Activated CD8-positive, alpha-beta T cell treated with anti-CD3 and anti-CD28 coated beads for 36 hours (primary cell): ENCODE measurements at regions of chr17 and their contacts with region 1.

Region 1: GRCh38 chr17:5031365-5032082 is 3.7 kb downstream of the SLC52A1 start:
- DNase-seq: peak; percentile 93
- ATAC-seq: peak; percentile 86
- H3K4me3 Mint-ChIP-seq: peak overlapping the region; percentile 66
- H3K27ac Mint-ChIP-seq: peak overlapping the region; percentile 83
- H3K4me1 Mint-ChIP-seq: peaks cover 16% of the 10 kb centered on the region
- H3K27me3 Mint-ChIP-seq: no peaks in the 10 kb centered on the region
- CTCF ChIP-seq: peak; percentile 83

Region 2: DNA sequence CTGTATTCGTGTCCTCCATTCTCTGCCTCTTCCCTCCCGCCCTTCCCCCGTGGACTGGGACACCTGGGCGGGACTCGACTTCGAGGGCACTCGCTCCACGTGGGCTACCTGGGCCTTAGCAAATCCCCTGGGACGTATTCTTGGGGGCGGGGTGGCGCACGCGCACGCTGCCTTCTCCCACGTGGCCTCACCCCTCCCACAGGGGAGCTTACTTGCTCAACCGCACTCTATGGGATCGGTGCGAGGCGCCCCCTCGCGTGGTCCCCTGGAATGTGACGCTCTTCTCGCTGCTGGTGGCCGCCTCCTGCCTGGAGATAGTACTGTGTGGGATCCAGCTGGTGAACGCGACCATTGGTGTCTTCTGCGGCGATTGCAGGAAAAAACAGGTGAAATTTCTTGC is 248.9 kb before region 1 on chr17:
- CTCF ChIA-PET with region 1: no interaction called
- POLR2A ChIA-PET with region 1: no interaction called
- intact Hi-C with region 1: no loop called
- DNase-seq: peak; percentile 31
- ATAC-seq: peak; percentile 28
- H3K4me3 Mint-ChIP-seq: no peak overlapping the region
- H3K27ac Mint-ChIP-seq: no peak overlapping the region
- H3K4me1 Mint-ChIP-seq: peaks cover 15% of the 10 kb centered on the region
- H3K27me3 Mint-ChIP-seq: peaks cover 46% of the 10 kb centered on the region
- CTCF ChIP-seq: no peak

Region 3: DNA sequence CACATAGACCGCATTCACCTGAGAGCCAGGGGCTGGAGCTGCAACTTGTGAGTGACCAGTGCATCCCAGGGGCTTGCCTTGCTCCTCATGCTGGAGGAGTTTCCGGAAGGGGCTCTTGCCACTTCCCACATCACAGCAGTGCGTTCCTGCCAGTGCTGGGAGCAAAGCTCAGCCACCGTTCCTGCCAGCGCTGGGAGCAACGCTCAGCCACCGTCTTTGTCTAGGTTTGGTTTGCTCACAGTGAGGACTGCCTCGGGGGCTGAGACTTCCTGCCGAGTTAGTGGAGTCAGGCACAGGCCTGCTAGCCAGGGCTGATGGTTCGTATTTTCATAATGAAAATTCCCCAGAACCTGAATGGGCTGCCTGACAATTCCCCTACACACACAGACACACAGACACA is 123.2 kb before region 1 on chr17:
- CTCF ChIA-PET with region 1: interaction called, 12 read pairs
- POLR2A ChIA-PET with region 1: no interaction called
- intact Hi-C with region 1: no loop called
- DNase-seq: peak; percentile 31
- ATAC-seq: peak; percentile 11
- H3K4me3 Mint-ChIP-seq: no peak overlapping the region
- H3K27ac Mint-ChIP-seq: no peak overlapping the region
- H3K4me1 Mint-ChIP-seq: peaks cover 12% of the 10 kb centered on the region
- H3K27me3 Mint-ChIP-seq: no peaks in the 10 kb centered on the region
- CTCF ChIP-seq: no peak

Region 4: GRCh38 chr17:4953461-4953961 is 78.0 kb before region 1 on chr17:
- CTCF ChIA-PET with region 1: no interaction called
- POLR2A ChIA-PET with region 1: no interaction called
- intact Hi-C with region 1: no loop called
- DNase-seq: no peak
- ATAC-seq: no peak
- H3K4me3 Mint-ChIP-seq: no peak overlapping the region
- H3K27ac Mint-ChIP-seq: no peak overlapping the region
- H3K4me1 Mint-ChIP-seq: peaks cover 18% of the 10 kb centered on the region
- H3K27me3 Mint-ChIP-seq: no peaks in the 10 kb centered on the region
- CTCF ChIP-seq: no peak

Region 5: GRCh38 chr17:5019475-5019956 is 12.0 kb before region 1 on chr17:
- CTCF ChIA-PET with region 1: interaction called, 11 read pairs
- POLR2A ChIA-PET with region 1: interaction called, 3 read pairs
- intact Hi-C with region 1: no loop called
- DNase-seq: peak; percentile 73
- ATAC-seq: peak; percentile 98
- H3K4me3 Mint-ChIP-seq: no peak overlapping the region
- H3K27ac Mint-ChIP-seq: peak overlapping the region; percentile 44
- H3K4me1 Mint-ChIP-seq: peaks cover 15% of the 10 kb centered on the region
- H3K27me3 Mint-ChIP-seq: no peaks in the 10 kb centered on the region
- CTCF ChIP-seq: peak; percentile 45

Region 6: GRCh38 chr17:5049314-5049895 is 17.9 kb after region 1 on chr17:
- CTCF ChIA-PET with region 1: interaction called, 16 read pairs
- POLR2A ChIA-PET with region 1: interaction called, 5 read pairs
- intact Hi-C with region 1: no loop called
- DNase-seq: peak; percentile 69
- ATAC-seq: peak; percentile 84
- H3K4me3 Mint-ChIP-seq: no peak overlapping the region
- H3K27ac Mint-ChIP-seq: peak overlapping the region; percentile 79
- H3K4me1 Mint-ChIP-seq: peaks cover 32% of the 10 kb centered on the region
- H3K27me3 Mint-ChIP-seq: no peaks in the 10 kb centered on the region
- CTCF ChIP-seq: no peak

Region 7: GRCh38 chr17:5055543-5055942 is 24.0 kb after region 1 on chr17:
- CTCF ChIA-PET with region 1: interaction called, 75 read pairs
- POLR2A ChIA-PET with region 1: no interaction called
- intact Hi-C with region 1: no loop called
- DNase-seq: no peak
- ATAC-seq: no peak
- H3K4me3 Mint-ChIP-seq: no peak overlapping the region
- H3K27ac Mint-ChIP-seq: no peak overlapping the region
- H3K4me1 Mint-ChIP-seq: peaks cover 2% of the 10 kb centered on the region
- H3K27me3 Mint-ChIP-seq: no peaks in the 10 kb centered on the region
- CTCF ChIP-seq: no peak